Activated naive CD4-positive, alpha-beta T cell treated with anti-CD3 and anti-CD28 coated beads for 36 hours (primary cell): ENCODE measurements at regions of chr1 and their contacts with region 1.

Region 1: GRCh38 chr1:169893494-169894362 is at the start of gene SCYL3:
- DNase-seq: peak; percentile 94
- H3K4me3 Mint-ChIP-seq: peak within 1 kb of the TSS; percentile 87
- H3K27ac Mint-ChIP-seq: peak within 1 kb of the TSS; percentile 100
- H3K4me1 Mint-ChIP-seq: peaks cover 34% of the 10 kb centered on the region
- H3K27me3 Mint-ChIP-seq: no peaks in the 10 kb centered on the region
- total RNA-seq, gene SCYL3: 8.8 TPM

Region 2: GRCh38 chr1:167936068-167936929 is 1957.4 kb before region 1 on chr1 and contains the start of gene DCAF6:
- CTCF ChIA-PET with region 1: no interaction called
- intact Hi-C with region 1: loop called (anchors 10 kb)
- DNase-seq: peak; percentile 97
- H3K4me3 Mint-ChIP-seq: peak within 1 kb of the TSS; percentile 85
- H3K27ac Mint-ChIP-seq: peak within 1 kb of the TSS; percentile 100
- H3K4me1 Mint-ChIP-seq: peaks cover 32% of the 10 kb centered on the region
- H3K27me3 Mint-ChIP-seq: no peaks in the 10 kb centered on the region
- total RNA-seq, gene DCAF6: 15.4 to 15.9 TPM

Region 3: DNA sequence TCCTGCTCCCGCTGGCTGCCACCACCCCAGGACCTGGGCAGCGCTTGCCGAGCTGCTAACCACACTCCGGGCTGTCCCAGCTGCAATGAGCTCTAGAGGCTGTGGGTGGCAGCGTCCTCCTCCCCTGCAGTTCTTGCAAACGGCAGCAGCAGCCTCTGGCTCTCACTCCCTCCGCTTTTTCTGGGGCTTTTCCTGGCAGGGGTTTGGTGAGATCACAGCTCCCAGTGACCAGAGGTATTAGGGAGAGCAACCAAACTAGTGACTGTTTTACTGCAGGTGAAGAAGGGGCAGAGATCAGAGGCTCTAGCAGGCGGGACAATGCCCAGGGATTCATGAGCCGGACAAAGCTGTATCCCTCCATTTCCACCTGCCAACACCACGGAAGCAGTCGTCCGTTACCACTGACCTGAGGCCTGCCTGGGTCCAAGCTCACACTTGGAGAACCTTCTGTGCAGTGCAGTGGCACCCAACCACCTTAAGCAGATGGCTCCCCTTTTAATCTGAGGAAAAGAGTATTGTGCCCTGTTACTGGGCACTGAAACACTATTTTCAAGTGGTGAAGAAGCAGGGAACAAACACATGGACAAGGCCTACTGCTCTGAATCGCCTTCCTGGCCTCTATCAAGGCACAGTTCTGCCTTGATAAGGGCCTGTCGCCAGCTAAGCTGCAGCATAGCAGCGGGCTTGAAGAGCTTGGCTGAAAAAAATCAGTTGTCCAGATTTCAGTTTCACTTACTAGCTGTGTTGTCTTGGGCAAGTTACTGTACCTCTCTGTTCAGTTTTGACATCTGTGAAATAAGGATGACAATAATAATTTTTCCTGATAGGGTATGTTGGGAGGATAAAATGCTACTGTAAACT is 307.1 kb before region 1 on chr1 and contains the start of gene F5:
- CTCF ChIA-PET with region 1: interaction called, 4 read pairs
- intact Hi-C with region 1: loop called (anchors 1 kb)
- DNase-seq: peak; percentile 94
- H3K4me3 Mint-ChIP-seq: peak within 1 kb of the TSS; percentile 94
- H3K27ac Mint-ChIP-seq: peak within 1 kb of the TSS; percentile 97
- H3K4me1 Mint-ChIP-seq: peaks cover 60% of the 10 kb centered on the region
- H3K27me3 Mint-ChIP-seq: no peaks in the 10 kb centered on the region
- total RNA-seq, gene F5: 58.6 to 59.1 TPM

Region 4: GRCh38 chr1:169694304-169695075 is 199.2 kb before region 1 on chr1:
- CTCF ChIA-PET with region 1: no interaction called
- intact Hi-C with region 1: loop called (anchors 2 kb)
- DNase-seq: peak; percentile 59
- H3K4me3 Mint-ChIP-seq: peak overlapping the region; percentile 32
- H3K27ac Mint-ChIP-seq: peak overlapping the region; percentile 94
- H3K4me1 Mint-ChIP-seq: peaks cover 96% of the 10 kb centered on the region
- H3K27me3 Mint-ChIP-seq: no peaks in the 10 kb centered on the region

Region 5: DNA sequence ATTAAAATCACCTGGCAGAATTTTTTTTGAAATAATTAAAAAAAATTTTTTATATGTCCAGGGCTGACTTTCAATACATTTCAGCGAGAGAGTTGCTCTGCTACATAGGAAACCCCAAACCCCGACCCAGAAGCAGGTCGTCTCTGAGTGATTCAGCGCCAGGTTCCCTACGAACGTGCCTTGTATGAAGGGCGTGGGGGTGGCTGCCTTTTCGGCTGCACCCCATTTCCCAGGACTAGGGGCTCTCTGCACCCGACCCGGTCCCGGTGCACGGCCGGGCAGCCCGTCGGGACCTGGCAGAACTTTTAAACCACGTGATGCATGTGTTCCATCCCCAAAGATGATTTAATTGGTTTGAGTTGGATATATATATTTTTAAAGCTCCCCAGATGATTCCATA is 15.8 kb after region 1 on chr1:
- CTCF ChIA-PET with region 1: interaction called, 4 read pairs
- intact Hi-C with region 1: loop called (anchors 2 kb)
- DNase-seq: no peak
- H3K4me3 Mint-ChIP-seq: no peak overlapping the region
- H3K27ac Mint-ChIP-seq: no peak overlapping the region
- H3K4me1 Mint-ChIP-seq: peaks cover 4% of the 10 kb centered on the region
- H3K27me3 Mint-ChIP-seq: no peaks in the 10 kb centered on the region

Region 6: DNA sequence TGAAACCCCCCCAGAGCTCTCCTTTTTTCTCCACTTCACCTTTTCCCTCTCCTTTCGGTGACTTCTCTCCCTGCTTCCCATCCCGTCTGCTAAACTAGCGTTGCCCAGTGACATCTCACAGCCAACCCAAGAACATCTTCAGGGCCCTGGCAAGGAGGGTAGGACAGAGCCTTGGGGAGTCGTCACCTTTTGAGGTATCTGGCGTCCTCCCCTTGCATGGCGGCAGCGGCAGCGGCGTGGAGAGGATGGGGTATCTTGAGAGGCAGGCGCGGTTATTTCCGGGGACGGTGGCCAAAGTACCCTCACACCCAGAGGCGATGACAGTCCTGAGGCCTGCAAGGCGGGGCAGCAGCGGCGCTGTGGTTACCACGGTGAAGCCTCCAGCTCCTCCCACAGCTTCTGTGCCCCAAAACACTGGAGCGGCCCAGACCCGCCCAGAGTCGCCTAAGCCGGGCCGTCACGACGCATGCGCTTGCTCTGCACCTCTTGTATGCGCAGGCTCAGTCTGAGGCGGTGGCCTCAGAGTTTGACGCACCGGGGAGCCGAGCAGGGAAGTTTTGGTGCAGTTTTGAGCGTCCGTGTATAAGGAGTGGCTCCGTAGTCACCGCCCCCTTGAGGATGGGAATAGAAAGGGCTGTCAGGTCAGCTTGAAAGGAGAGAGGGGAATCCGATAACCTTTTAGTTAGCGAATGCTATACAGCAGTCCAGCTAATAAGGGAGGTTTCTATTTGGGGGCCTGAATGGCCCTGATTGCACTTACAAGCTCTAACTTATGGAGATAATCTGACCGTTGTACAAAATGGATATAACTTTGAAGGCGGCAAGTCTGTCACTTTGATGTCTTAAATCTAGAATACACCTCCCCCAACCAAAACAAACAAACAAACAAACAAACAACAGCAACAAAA is 180.8 kb after region 1 on chr1 and contains the start of gene KIFAP3:
- CTCF ChIA-PET with region 1: no interaction called
- intact Hi-C with region 1: loop called (anchors 1 kb)
- DNase-seq: peak; percentile 98
- H3K4me3 Mint-ChIP-seq: peak within 1 kb of the TSS; percentile 92
- H3K27ac Mint-ChIP-seq: peak within 1 kb of the TSS; percentile 74
- H3K4me1 Mint-ChIP-seq: peaks cover 48% of the 10 kb centered on the region
- H3K27me3 Mint-ChIP-seq: no peaks in the 10 kb centered on the region
- total RNA-seq, gene KIFAP3: 8.7 to 8.8 TPM

Region 7: GRCh38 chr1:171741872-171742576 is 1848.3 kb after region 1 on chr1 and contains the start of gene VAMP4:
- CTCF ChIA-PET with region 1: no interaction called
- intact Hi-C with region 1: loop called (anchors 5 kb)
- DNase-seq: peak; percentile 90
- H3K4me3 Mint-ChIP-seq: peak within 1 kb of the TSS; percentile 96
- H3K27ac Mint-ChIP-seq: peak within 1 kb of the TSS; percentile 99
- H3K4me1 Mint-ChIP-seq: peaks cover 40% of the 10 kb centered on the region
- H3K27me3 Mint-ChIP-seq: no peaks in the 10 kb centered on the region
- total RNA-seq, gene VAMP4: 10.5 to 10.9 TPM